Activated T-helper 1 cell treated with anti-CD3 and anti-CD28 coated beads, Interleukin-12 subunit alpha, Interleukin-12 subunit beta, Interleukin-2, Interleukin-4 antibody, amounts not matched to agents 30 ng/mL and 10 ng/mL and 1 ng/mL, durations not matched to agents 14 hours and 24 hours and 36 hours (primary cell): ENCODE measurements at regions of chr13 and their contacts with region 1.

Region 1: GRCh38 chr13:111184458-111185401 is 69.6 kb downstream of the ARHGEF7 start:
- DNase-seq: peak; percentile 17
- H3K4me3 Mint-ChIP-seq: peak overlapping the region; percentile 60
- H3K27ac Mint-ChIP-seq: peak overlapping the region; percentile 87
- H3K4me1 Mint-ChIP-seq: peaks cover 88% of the 10 kb centered on the region
- H3K27me3 Mint-ChIP-seq: no peaks in the 10 kb centered on the region

Region 2: DNA sequence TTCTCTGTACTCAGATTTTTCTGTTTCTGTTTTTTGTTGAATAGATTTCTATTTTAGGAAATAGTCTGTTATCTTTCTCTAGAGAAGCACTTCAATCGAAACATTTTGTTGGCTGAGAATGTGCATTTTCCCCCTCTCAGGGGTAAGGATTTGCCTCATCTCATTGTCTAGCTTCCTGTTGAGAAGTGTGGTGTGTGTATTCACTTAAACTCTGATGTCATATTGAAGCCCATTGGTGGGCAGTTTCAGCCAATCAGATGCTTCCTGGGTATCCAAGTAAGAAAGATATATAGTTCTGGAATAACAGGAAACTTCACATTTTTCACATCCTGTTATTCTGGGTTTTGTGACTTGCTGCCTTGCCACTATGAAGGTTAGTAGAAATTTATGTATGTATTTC is 18.0 kb after region 1 on chr13:
- intact Hi-C with region 1: loop called (anchors 1 kb)
- DNase-seq: no peak
- H3K4me3 Mint-ChIP-seq: no peak overlapping the region
- H3K27ac Mint-ChIP-seq: peak overlapping the region; percentile 31
- H3K4me1 Mint-ChIP-seq: peaks cover 55% of the 10 kb centered on the region
- H3K27me3 Mint-ChIP-seq: no peaks in the 10 kb centered on the region

Region 3: GRCh38 chr13:111219280-111219679 is 34.5 kb after region 1 on chr13:
- intact Hi-C with region 1: loop called (anchors 2 kb)
- DNase-seq: no peak
- H3K4me3 Mint-ChIP-seq: no peak overlapping the region
- H3K27ac Mint-ChIP-seq: no peak overlapping the region
- H3K4me1 Mint-ChIP-seq: peaks cover 36% of the 10 kb centered on the region
- H3K27me3 Mint-ChIP-seq: no peaks in the 10 kb centered on the region

Region 4: GRCh38 chr13:111247562-111247961 is 62.8 kb after region 1 on chr13:
- intact Hi-C with region 1: no loop called
- DNase-seq: no peak
- H3K4me3 Mint-ChIP-seq: no peak overlapping the region
- H3K27ac Mint-ChIP-seq: no peak overlapping the region
- H3K4me1 Mint-ChIP-seq: no peaks in the 10 kb centered on the region
- H3K27me3 Mint-ChIP-seq: no peaks in the 10 kb centered on the region

Region 5: GRCh38 chr13:111429064-111429558 is 244.4 kb after region 1 on chr13:
- intact Hi-C with region 1: no loop called
- DNase-seq: peak; percentile 7
- H3K4me3 Mint-ChIP-seq: no peak overlapping the region
- H3K27ac Mint-ChIP-seq: no peak overlapping the region
- H3K4me1 Mint-ChIP-seq: no peaks in the 10 kb centered on the region
- H3K27me3 Mint-ChIP-seq: peaks cover 4% of the 10 kb centered on the region